ENCODE measurements at regions of chr10 and their contacts with region 1.

Region 1: DNA sequence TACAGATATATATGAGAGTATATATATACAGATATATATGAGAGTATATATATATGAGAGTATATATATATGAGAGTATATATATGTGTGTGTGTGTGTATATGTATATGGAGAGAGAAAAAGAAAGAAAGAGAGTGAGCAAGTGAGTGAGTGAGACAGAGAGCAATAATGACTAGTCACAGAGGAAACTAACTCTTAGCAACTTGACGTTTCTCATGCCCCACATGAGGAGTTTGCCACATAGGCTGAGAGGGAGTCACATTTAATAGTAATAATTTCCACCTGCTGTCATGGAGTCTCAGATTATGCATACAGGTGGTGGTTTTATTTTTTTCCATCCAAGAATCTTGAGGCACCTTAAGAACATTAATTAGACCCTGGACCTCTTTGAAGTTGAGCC is 199.9 kb downstream of the GATA3 start:
- DNase-seq: no peak
- ATAC-seq: no peak
- H3K4me3 ChIP-seq: no peak overlapping the region
- H3K4me3 Mint-ChIP-seq: no peak overlapping the region
- H3K27ac ChIP-seq: no peak overlapping the region
- H3K27ac Mint-ChIP-seq: no peak overlapping the region
- H3K4me1 ChIP-seq: no peaks in the 10 kb centered on the region
- H3K4me1 Mint-ChIP-seq: no peaks in the 10 kb centered on the region
- H3K27me3 ChIP-seq: no peaks in the 10 kb centered on the region
- H3K27me3 Mint-ChIP-seq: no peaks in the 10 kb centered on the region
- CTCF ChIP-seq: no peak

Region 2: DNA sequence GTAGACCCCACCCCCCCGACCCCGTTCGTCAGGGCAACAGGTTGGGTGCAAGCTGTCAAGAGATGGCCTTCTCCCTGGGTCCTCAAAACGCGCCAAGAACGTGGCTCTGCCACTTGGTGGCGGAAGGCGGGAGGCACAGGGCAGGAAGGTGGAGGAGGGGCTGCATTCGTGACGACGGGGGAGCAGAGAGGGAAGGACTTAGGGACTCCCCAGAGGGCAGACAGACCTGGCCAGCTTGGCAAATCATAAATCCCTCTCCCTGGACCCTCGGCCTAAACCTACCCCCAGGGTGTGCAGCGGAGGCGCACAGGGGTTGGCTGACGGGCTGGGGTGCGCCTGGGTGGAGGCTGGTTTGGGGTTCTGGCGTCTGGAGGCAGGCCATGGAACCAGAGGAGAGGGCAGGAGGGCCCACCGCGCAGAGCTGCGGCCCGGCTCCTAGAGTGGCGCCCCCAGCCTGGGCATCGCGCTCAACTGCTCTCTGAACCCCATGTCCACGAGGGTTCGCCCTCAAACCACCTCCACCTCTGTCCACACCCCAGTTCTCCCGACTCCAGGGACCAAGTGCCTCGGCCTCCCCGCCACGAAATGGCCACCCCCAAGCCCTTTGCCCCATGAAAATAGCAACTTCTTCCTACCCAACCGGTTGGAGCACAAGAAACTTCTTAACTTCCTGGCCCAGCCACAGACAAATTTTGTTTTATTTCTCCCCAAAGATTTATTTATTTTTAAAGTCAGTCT is 210.6 kb before region 1 on chr10:
- CTCF ChIA-PET with region 1: no interaction called
- POLR2A ChIA-PET with region 1: no interaction called
- intact Hi-C with region 1: no loop called
- DNase-seq: peak in 9 of 14 experiments; percentile 28 to 80 (median 49)
- ATAC-seq: peak; percentile 54
- H3K4me3 ChIP-seq: no peak overlapping the region
- H3K4me3 Mint-ChIP-seq: peak overlapping the region; percentile 66
- H3K27ac ChIP-seq: no peak overlapping the region
- H3K27ac Mint-ChIP-seq: peak overlapping the region; percentile 34
- H3K4me1 ChIP-seq: peaks cover 70% of the 10 kb centered on the region
- H3K4me1 Mint-ChIP-seq: peaks cover 78% of the 10 kb centered on the region
- H3K27me3 ChIP-seq: peaks cover 97 to 99% of the 10 kb centered on the region in 2 experiments
- H3K27me3 Mint-ChIP-seq: peaks cover 99% of the 10 kb centered on the region
- CTCF ChIP-seq: peak; percentile 21

Region 3: GRCh38 chr10:8312781-8313180 is 58.4 kb after region 1 on chr10:
- CTCF ChIA-PET with region 1: no interaction called
- POLR2A ChIA-PET with region 1: no interaction called
- intact Hi-C with region 1: loop called in 1 of 2 experiments (anchors 5 kb)
- DNase-seq: no peak
- ATAC-seq: no peak
- H3K4me3 ChIP-seq: no peak overlapping the region
- H3K4me3 Mint-ChIP-seq: no peak overlapping the region
- H3K27ac ChIP-seq: no peak overlapping the region
- H3K27ac Mint-ChIP-seq: no peak overlapping the region
- H3K4me1 ChIP-seq: no peaks in the 10 kb centered on the region
- H3K4me1 Mint-ChIP-seq: no peaks in the 10 kb centered on the region
- H3K27me3 ChIP-seq: no peaks in the 10 kb centered on the region
- H3K27me3 Mint-ChIP-seq: no peaks in the 10 kb centered on the region
- CTCF ChIP-seq: no peak

Region 4: DNA sequence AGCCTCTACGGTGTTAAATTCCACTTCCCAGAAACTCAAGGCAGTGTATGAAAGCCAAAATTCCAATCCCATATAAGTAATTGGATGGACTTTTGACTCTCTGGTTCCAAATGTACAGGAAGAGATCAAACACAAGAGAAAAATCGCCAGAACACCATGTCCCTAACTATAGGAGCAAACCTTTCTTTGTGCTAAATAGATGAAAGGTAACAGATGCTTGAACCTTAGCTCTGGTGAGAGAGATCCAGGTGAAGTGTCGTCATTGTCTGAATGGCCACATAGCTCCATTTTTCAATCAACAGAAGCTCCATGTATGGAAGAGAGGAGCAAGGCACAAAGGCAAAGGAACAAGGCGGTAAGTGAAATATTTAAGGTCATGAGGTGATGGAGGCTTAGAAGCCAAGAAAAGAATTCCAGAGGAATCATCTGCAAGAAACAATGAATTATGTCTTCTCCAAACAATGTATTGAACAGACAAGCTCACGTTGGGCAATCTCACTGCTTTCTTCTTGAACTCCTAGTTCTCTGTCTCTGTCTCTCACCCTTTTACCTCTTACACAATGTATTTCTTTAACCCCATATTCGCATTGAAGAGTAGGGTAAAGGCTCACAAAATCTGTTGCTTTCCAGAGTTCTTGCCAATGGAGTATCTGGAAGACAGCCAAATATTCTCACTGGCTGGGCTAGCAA is 385.3 kb after region 1 on chr10:
- CTCF ChIA-PET with region 1: no interaction called
- POLR2A ChIA-PET with region 1: no interaction called
- intact Hi-C with region 1: no loop called
- DNase-seq: no peak
- ATAC-seq: no peak
- H3K4me3 ChIP-seq: no peak overlapping the region
- H3K4me3 Mint-ChIP-seq: no peak overlapping the region
- H3K27ac ChIP-seq: no peak overlapping the region
- H3K27ac Mint-ChIP-seq: no peak overlapping the region
- H3K4me1 ChIP-seq: no peaks in the 10 kb centered on the region
- H3K4me1 Mint-ChIP-seq: no peaks in the 10 kb centered on the region
- H3K27me3 ChIP-seq: no peaks in the 10 kb centered on the region
- H3K27me3 Mint-ChIP-seq: no peaks in the 10 kb centered on the region
- CTCF ChIP-seq: no peak